ENCODE measurements at regions of chr10 and their contacts with region 1.

Region 1: DNA sequence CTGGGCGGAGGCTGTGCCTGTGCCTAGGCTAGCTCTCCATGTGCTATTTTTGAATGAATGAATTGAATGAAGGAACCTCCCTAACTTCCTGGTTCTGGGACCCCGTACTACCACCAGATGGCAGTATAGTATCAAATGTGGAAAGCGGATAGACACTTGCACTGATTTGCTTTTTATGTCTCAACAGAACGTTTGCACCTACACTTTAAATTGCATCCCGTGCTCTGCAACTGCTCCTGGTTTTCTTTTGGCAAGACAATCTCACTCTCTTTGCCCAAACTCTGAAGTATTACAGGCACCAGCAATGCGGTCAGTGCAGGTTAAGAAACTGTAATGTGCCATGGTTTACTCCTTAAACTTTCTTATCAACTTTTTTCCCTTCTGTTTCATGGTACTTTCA is 6.5 kb downstream of the FZD8 start:
- DNase-seq: peak; percentile 89
- H3K4me3 ChIP-seq: peak overlapping the region; percentile 11
- H3K27ac ChIP-seq: no peak overlapping the region
- H3K4me1 ChIP-seq: peaks cover 43% of the 10 kb centered on the region
- H3K27me3 ChIP-seq: no peaks in the 10 kb centered on the region
- CTCF ChIP-seq: peak; percentile 93

Region 2: DNA sequence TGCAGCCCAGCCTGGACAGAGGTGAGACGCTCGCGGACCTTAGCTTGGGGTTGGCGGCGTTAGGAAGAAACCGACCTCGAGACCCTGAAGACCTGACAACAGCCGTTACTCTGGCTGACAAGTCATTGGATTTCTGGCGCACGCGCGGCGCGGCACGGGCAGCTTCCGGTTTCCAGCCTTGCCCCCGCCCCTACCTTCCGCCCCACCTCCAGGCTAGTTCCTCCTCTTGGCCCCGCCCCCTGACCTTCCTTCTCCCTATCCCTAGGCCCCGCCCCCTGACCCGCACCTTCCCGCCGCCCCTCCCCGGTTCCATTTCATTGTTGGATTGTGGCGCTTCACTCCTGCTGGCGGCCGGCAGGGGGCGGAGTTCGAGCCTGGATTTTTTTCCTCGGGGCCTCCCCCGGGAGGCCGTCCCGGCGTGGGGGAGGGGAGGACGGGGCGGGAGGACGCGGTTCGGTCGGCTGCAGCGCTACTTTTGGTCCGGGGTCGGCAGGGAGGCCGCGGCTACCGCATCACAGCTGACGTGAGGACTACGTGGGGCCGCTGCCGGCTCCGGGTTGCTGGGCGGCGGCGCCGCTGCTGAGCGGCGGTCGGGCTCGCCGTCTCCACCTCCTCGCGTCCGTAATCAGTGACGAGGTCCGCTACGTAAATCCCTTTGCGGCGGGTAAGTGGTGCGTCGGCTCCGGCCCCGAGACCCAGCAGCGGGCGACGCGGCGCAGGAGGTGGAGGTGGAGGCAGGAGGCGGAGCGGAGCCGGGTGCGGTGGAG is 508.9 kb before region 1 on chr10 and contains the start of gene CREM:
- CTCF ChIA-PET with region 1: interaction called, 4 read pairs
- POLR2A ChIA-PET with region 1: no interaction called
- intact Hi-C with region 1: loop called (anchors 5 kb)
- DNase-seq: peak; percentile 98
- H3K4me3 ChIP-seq: peak within 1 kb of the TSS; percentile 97
- H3K27ac ChIP-seq: peak within 1 kb of the TSS; percentile 100
- H3K4me1 ChIP-seq: peaks cover 29% of the 10 kb centered on the region
- H3K27me3 ChIP-seq: no peaks in the 10 kb centered on the region
- CTCF ChIP-seq: peak; percentile 96
- total RNA-seq, gene CREM: 58.4 and 66.3 TPM in 2 replicates

Region 3: DNA sequence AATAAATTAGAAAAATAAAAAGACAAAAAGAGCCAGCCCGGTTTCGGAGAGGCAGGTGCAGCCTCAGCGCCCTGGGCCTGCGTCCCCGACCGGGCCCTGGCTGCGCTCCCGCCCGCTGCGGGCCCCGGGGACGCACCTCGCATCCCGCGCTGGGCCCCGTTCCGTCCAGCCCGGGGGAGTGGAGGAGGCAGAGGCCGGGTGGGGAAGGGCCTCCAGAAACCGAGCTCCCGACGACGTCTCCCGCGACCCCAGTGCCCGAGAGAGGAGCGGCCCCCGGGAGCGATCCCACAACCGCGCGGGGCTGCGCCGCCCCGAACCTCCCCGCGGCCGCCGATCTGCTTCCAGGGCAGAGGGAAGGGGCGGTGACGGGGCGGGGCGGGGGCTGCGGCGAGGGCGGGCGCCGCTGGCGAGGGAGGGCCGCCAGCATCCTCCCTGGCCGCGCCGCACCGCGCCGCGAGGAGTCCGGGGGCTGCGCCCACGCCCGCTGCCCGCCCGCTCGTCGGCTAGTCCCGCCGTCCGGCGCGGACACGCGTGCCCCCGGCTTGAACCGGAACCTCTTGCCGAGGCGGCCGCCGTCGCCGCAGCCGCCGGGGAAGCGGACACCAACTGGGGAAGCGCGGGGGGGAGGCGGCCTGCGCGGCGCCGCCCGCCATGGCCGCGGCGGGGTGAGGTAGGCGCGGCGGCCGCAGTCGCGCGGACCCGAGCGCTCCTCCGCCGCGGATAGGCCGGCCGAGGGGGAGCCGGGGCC is 299.3 kb before region 1 on chr10 and contains the start of gene CCNY:
- CTCF ChIA-PET with region 1: no interaction called
- POLR2A ChIA-PET with region 1: no interaction called
- intact Hi-C with region 1: no loop called
- DNase-seq: peak; percentile 85
- H3K4me3 ChIP-seq: peak within 1 kb of the TSS; percentile 91
- H3K27ac ChIP-seq: peak within 1 kb of the TSS; percentile 88
- H3K4me1 ChIP-seq: peaks cover 50% of the 10 kb centered on the region
- H3K27me3 ChIP-seq: no peaks in the 10 kb centered on the region
- CTCF ChIP-seq: no peak
- total RNA-seq, gene CCNY: 84.8 and 85.8 TPM in 2 replicates

Region 4: DNA sequence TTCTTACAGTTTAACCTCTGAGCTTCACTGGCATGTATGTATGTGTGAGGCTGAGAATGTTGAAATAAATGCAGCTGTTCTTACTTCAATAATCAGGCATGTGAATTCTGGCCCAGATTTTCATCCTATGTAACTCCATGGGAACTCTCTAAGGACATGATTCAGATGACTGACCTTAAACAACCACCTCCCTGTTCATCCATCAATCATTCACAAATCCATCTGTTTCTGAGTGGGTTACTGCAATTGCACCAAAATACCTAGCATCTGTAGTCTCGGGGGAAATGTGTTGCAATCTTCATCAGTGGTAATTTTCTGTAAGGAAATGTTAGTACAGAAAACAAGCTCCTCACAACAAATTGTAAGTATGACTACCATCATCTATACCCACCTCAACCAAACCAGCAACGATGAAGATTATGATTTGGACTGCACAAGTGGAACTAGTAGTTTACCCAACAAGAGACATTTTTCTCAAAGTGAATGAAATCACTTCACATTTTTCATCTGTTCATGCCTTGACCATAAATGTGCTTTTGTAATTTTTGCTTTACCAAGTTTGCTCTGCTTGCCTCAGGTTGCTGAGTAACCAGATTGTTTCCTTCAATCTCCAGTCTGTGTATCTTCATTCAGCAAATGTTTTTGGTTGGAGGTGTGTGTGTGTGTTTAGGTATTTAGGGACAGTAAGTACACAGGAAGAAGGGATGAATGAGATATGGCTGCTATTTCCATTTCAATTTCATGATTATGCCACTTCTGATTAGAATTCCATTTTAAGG is 72.3 kb after region 1 on chr10:
- CTCF ChIA-PET with region 1: no interaction called
- POLR2A ChIA-PET with region 1: no interaction called
- intact Hi-C with region 1: no loop called
- DNase-seq: no peak
- H3K4me3 ChIP-seq: no peak overlapping the region
- H3K27ac ChIP-seq: no peak overlapping the region
- H3K4me1 ChIP-seq: no peaks in the 10 kb centered on the region
- H3K27me3 ChIP-seq: no peaks in the 10 kb centered on the region
- CTCF ChIP-seq: no peak

Region 5: DNA sequence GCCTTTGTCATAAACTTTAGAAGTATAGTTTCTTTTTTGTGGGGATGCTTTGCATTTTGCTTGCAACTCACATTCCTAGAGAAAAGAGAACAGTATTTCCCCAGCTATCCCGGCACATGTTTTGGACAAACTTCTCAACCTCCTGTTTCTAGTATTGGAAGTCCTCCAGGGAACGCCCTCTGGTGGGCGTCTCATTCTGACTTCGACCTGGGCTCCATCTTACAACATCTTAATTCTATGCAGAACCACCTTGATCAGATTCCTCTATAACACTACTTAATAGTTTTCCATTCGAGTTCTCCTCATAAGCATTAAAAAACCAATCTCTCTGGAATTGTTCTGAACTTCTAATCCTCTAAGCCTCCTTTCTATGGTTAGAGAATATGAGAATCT is 146.1 kb after region 1 on chr10:
- CTCF ChIA-PET with region 1: interaction called, 3 read pairs
- POLR2A ChIA-PET with region 1: no interaction called
- intact Hi-C with region 1: loop called (anchors 1 kb)
- DNase-seq: peak; percentile 55
- H3K4me3 ChIP-seq: no peak overlapping the region
- H3K27ac ChIP-seq: no peak overlapping the region
- H3K4me1 ChIP-seq: peaks cover 12% of the 10 kb centered on the region
- H3K27me3 ChIP-seq: no peaks in the 10 kb centered on the region
- CTCF ChIP-seq: peak; percentile 60

Region 6: GRCh38 chr10:36489611-36490228 is 854.1 kb after region 1 on chr10:
- CTCF ChIA-PET with region 1: no interaction called
- POLR2A ChIA-PET with region 1: no interaction called
- intact Hi-C with region 1: loop called (anchors 10 kb)
- DNase-seq: peak; percentile 63
- H3K4me3 ChIP-seq: no peak overlapping the region
- H3K27ac ChIP-seq: no peak overlapping the region
- H3K4me1 ChIP-seq: peaks cover 13% of the 10 kb centered on the region
- H3K27me3 ChIP-seq: no peaks in the 10 kb centered on the region
- CTCF ChIP-seq: no peak

Region 7: DNA sequence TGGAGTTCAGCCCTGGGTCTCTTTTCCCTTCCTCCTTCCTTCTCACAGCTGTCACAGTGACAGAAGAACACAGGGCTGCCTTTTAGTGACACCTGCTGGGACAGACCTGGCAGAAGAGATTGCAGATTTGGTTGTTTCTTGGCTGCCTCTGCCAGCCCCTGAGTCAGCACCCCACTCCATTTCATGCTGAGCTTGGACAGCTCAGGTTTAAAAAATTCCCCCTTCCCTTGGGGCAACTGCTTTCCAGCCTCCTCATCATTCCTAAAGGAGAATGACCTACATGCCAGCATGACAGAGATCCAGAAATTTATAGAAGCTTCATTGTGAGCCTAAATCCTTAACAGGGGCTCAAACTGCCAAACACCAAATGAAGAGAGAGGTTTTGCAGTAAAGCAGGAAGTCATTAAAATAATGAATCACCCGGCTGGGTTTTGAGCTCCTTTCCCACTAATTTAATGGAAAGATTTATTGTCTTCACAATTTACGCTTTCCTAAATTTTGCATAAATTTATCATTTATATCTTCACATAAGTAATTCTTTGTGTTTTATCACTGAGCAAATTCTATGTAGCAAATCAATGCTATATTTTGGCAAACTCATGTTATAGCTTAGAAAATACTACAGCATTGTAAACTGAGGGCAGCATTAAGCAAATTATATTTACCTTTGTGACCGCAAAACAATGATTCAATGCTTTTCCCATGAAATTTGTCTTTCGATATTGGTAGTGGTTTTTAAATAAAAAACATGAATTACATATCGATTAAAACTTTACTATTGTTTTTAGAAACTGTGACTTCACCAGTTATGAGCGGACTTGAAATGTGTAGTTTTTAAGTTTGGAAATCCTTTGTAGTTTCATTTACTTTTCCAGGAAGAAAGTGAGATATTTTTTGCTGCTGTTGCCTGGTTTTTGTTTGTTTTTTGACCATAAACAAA is 1090.3 kb after region 1 on chr10:
- CTCF ChIA-PET with region 1: interaction called, 6 read pairs
- POLR2A ChIA-PET with region 1: no interaction called
- intact Hi-C with region 1: loop called (anchors 1 kb)
- DNase-seq: peak; percentile 98
- H3K4me3 ChIP-seq: no peak overlapping the region
- H3K27ac ChIP-seq: peak overlapping the region; percentile 54
- H3K4me1 ChIP-seq: peaks cover 51% of the 10 kb centered on the region
- H3K27me3 ChIP-seq: no peaks in the 10 kb centered on the region
- CTCF ChIP-seq: peak; percentile 76